ENCODE measurements at regions of chr3 and their contacts with region 1.

Region 1: DNA sequence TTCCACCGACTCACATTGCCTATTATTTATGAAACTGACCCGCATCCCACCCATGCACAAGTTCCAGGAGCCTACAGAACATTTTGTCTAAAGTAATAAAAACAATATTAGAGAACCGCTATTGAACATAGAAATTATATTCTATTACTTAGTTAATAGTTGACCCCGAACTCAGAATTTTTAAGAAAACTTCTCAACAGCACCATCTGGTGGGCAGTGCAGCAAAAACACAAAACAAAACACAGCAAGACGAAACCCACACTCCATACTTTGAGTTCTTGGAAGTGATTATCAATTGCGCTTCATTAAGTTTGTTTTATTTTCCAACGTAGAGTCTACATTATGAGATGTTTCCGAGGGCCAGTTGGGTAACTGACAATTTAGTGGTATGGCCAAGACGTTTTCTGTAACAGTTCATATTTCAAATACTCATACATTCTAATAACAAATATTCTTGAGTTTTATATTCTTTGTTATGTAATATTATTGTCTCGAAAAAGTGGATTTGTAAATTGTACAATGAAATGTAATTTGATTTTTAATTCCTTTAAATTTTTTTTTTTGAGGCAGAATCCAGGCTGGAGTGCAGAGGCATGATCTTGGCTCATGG is 24.0 kb upstream of the C3orf70 start:
- DNase-seq: peak; percentile 75
- H3K4me3 Mint-ChIP-seq: no peak overlapping the region
- H3K27ac Mint-ChIP-seq: no peak overlapping the region
- H3K4me1 Mint-ChIP-seq: no peaks in the 10 kb centered on the region
- H3K27me3 Mint-ChIP-seq: peaks cover 7% of the 10 kb centered on the region

Region 2: GRCh38 chr3:184874709-184875644 is 301.9 kb before region 1 on chr3:
- intact Hi-C with region 1: loop called (anchors 1 kb)
- DNase-seq: peak; percentile 69
- H3K4me3 Mint-ChIP-seq: no peak overlapping the region
- H3K27ac Mint-ChIP-seq: no peak overlapping the region
- H3K4me1 Mint-ChIP-seq: peaks cover 14% of the 10 kb centered on the region
- H3K27me3 Mint-ChIP-seq: no peaks in the 10 kb centered on the region

Region 3: GRCh38 chr3:184949251-184949969 is 227.4 kb before region 1 on chr3:
- intact Hi-C with region 1: loop called (anchors 5 kb)
- DNase-seq: no peak
- H3K4me3 Mint-ChIP-seq: no peak overlapping the region
- H3K27ac Mint-ChIP-seq: no peak overlapping the region
- H3K4me1 Mint-ChIP-seq: peaks cover 10% of the 10 kb centered on the region
- H3K27me3 Mint-ChIP-seq: no peaks in the 10 kb centered on the region

Region 4: DNA sequence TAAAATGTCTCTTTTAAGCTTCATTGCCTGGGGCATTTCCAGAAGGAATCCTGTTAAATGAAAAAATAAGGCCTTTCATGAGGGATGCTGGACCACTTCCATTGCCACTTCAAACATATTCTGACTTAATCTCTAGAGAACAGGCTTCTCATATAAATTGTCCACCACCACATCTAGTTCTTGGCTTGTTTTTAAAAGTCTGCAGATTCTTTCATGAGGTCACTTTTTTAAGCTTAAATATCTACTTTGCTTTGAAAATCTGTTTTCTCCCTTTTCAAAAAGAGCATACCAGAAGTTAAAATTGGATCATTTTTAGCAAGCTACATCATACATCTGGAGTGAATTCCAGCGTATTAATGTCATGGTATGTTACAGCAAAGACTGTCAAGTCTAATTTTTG is 155.6 kb before region 1 on chr3:
- intact Hi-C with region 1: no loop called
- DNase-seq: no peak
- H3K4me3 Mint-ChIP-seq: no peak overlapping the region
- H3K27ac Mint-ChIP-seq: no peak overlapping the region
- H3K4me1 Mint-ChIP-seq: peaks cover 2% of the 10 kb centered on the region
- H3K27me3 Mint-ChIP-seq: no peaks in the 10 kb centered on the region

Region 5: GRCh38 chr3:185215873-185216606 is 39.2 kb after region 1 on chr3:
- intact Hi-C with region 1: no loop called
- DNase-seq: no peak
- H3K4me3 Mint-ChIP-seq: no peak overlapping the region
- H3K27ac Mint-ChIP-seq: no peak overlapping the region
- H3K4me1 Mint-ChIP-seq: no peaks in the 10 kb centered on the region
- H3K27me3 Mint-ChIP-seq: no peaks in the 10 kb centered on the region

Region 6: GRCh38 chr3:186021673-186022362 is 845.0 kb after region 1 on chr3:
- intact Hi-C with region 1: no loop called
- DNase-seq: no peak
- H3K4me3 Mint-ChIP-seq: no peak overlapping the region
- H3K27ac Mint-ChIP-seq: no peak overlapping the region
- H3K4me1 Mint-ChIP-seq: no peaks in the 10 kb centered on the region
- H3K27me3 Mint-ChIP-seq: peaks cover 41% of the 10 kb centered on the region

Measured in activated CD4-positive, alpha-beta T cell treated with anti-CD3 and anti-CD28 coated beads, Interleukin-2, amount 10 ng/mL, durations not matched to agents 24 days and 14 days (primary cell).